ENCODE measurements at regions of chr11 and their contacts with region 1.

Region 1: DNA sequence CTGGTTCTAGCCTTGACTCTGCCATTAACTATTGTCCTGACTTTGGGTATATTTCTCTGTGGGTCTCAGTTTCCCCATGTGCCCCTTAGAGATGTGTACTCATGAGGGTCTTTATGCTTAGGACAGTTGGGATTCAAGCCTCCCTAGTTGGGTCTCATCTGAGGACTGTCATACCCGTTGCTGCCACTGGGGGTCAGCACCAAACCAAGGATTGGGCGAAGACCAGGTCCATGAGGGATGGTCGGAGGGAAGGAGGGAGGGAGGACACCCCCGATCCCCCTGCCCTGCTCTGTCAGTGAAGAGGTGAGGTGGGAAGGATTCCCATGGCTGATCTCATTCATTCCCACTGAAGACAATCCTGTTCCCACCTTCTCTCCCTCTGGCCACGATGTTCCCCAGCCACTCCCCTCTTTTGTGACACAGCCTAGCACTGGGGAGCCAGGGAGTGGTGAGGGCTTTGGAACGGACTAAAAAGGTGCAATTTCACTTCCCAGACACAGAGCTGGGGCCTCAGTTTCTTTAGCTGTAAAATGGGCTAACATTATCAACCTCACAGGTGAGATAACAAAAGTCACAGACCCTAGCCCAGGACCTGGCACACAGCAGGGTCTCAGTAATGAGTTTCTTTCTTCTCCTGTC is 12.4 kb upstream of the KLHL35 start:
- DNase-seq: peak in 9 of 10 donors; percentile 66 to 85 (median 80)
- H3K4me3 ChIP-seq: no peak overlapping the region
- H3K27ac ChIP-seq: no peak overlapping the region
- H3K27me3 ChIP-seq: no peaks in the 10 kb centered on the region
- CTCF ChIP-seq: peak; percentile 80 to 100 (median 98)

Region 2: GRCh38 chr11:75406338-75406777 is 39.1 kb before region 1 on chr11:
- intact Hi-C with region 1: loop called in 1 of 2 experiments (anchors 5 kb)
- DNase-seq: peak in 1 of 10 donors; percentile 60
- H3K4me3 ChIP-seq: no peak overlapping the region
- H3K27ac ChIP-seq: peak overlapping the region in 1 of 59 donors; percentile 3
- H3K27me3 ChIP-seq: no peaks in the 10 kb centered on the region
- CTCF ChIP-seq: no peak

Region 3: DNA sequence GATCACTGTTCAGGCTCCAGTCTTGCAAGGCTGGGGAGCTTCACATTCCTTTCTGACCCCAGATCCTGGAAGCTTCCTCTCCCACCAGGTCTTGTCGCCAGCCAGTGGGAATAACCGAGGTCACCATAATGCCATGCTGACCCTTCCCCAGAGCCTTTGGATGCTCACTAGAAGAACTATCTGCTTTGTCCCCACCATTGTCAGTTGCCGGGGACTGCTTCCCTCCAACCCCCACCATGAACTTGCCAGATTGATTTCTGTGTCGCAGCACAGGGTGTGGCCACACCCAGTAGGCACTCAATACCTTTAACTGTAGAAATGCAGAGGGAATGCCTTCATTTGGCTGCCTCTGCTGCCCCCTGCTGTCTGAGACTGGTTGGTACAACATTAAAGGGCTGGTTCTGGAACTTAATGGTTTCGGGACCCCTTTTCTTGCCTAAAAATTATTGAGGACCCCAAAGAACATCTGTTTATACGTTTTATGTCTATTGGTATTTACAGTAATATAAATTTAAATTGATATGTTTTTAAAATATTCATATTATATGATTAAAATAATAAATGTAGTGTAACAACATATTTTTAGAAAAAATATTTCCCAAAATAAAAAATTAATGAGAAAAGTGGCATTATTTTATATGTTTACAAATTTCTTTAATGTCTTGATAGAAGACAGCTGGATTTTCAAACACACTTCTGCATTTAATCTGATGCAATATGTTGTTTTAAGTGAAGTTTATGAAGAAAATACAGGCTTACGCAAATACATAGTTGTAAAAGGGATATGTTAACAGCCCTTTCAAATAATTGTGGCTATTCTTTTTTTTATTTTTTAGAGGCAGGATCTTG is 87.0 kb after region 1 on chr11:
- intact Hi-C with region 1: loop called (anchors 1 kb)
- DNase-seq: peak in 8 of 10 donors; percentile 54 to 83 (median 76)
- H3K4me3 ChIP-seq: no peak overlapping the region
- H3K27ac ChIP-seq: no peak overlapping the region
- H3K27me3 ChIP-seq: no peaks in the 10 kb centered on the region
- CTCF ChIP-seq: peak; percentile 88 to 100 (median 96)

Measured in dorsolateral prefrontal cortex (tissue), 120 donors.